ENCODE measurements at regions of chr7 and their contacts with region 1.

Region 1: GRCh38 chr7:143884969-143885559 is 16.9 kb downstream of the TCAF1 start:
- DNase-seq: peak in 3 of 5 donors; percentile 35 to 56 (median 45)
- ATAC-seq: peak in 1 of 4 donors; percentile 30
- H3K4me3 ChIP-seq: peak overlapping the region in 10 of 12 donors; percentile 11 to 54 (median 41)
- H3K27ac ChIP-seq: peak overlapping the region in 3 of 12 donors; percentile 1 to 63 (median 35)
- H3K4me1 ChIP-seq: peaks cover 0 to 25% (median 11%) of the 10 kb centered on the region in 12 donors
- H3K27me3 ChIP-seq: peaks cover 0 to 15% (median 0%) of the 10 kb centered on the region in 9 donors
- CTCF ChIP-seq: no peak
- POLR2A ChIP-seq: no peak

Region 2: GRCh38 chr7:143901668-143902331 is 16.7 kb after region 1 on chr7 and contains the start of gene TCAF1:
- intact Hi-C with region 1: loop called in 3 of 10 experiments (anchors 1 to 2 kb)
- DNase-seq: peak; percentile 97 to 98 (median 97)
- ATAC-seq: peak; percentile 97 to 99 (median 99)
- H3K4me3 ChIP-seq: peak within 1 kb of the TSS; percentile 62 to 99 (median 89)
- H3K27ac ChIP-seq: peak within 1 kb of the TSS; percentile 86 to 98 (median 96)
- H3K4me1 ChIP-seq: peaks cover 0 to 41% (median 22%) of the 10 kb centered on the region in 12 donors
- H3K27me3 ChIP-seq: no peaks in the 10 kb centered on the region
- CTCF ChIP-seq: peak in 8 of 12 donors; percentile 17 to 50 (median 36)
- POLR2A ChIP-seq: peak in 1 of 2 donors; percentile 81
- total RNA-seq, gene TCAF1: 31.4 to 71.1 (median 58.0) TPM

Region 3: GRCh38 chr7:144001543-144001942 is 116.5 kb after region 1 on chr7:
- intact Hi-C with region 1: loop called in 1 of 10 experiments (anchors 10 kb)
- DNase-seq: no peak
- ATAC-seq: no peak
- H3K4me3 ChIP-seq: no peak overlapping the region
- H3K27ac ChIP-seq: no peak overlapping the region
- H3K4me1 ChIP-seq: peaks cover 0 to 5% (median 0%) of the 10 kb centered on the region in 12 donors
- H3K27me3 ChIP-seq: no peaks in the 10 kb centered on the region
- CTCF ChIP-seq: no peak
- POLR2A ChIP-seq: no peak

Region 4: DNA sequence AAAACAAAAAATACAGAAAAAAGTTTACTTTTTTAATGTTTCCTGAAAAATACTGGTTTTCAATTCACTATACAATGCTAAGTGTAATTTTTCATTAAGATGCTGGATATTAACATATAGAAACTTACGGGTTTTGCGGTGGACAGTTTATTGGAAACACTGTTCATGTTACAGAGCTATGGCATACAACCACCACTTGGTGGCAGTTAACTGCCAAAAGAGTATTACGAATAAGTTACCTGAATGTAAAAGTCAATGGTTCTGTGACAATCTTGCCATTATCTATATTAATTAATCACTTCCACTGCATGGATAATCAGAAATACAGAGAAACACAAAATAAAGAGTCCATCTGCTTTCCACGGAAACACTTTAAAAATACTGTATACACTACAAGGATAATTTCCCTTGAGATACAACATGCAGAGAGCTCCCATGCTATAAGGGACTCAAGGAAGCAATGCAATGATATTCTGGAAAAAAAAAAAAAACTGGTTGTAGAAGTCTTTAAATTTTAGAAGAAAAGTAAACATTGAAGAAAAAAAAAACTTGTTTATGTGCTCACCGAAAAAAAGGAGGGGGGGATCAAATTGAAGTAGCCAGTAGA is 853.7 kb after region 1 on chr7:
- intact Hi-C with region 1: no loop called
- DNase-seq: no peak
- ATAC-seq: peak in 2 of 4 donors; percentile 42 to 67
- H3K4me3 ChIP-seq: no peak overlapping the region
- H3K27ac ChIP-seq: no peak overlapping the region
- H3K4me1 ChIP-seq: peaks cover 0 to 3% (median 0%) of the 10 kb centered on the region in 12 donors
- H3K27me3 ChIP-seq: no peaks in the 10 kb centered on the region
- CTCF ChIP-seq: peak; percentile 58 to 77 (median 68)
- POLR2A ChIP-seq: no peak

Measured in heart left ventricle (tissue), 16 donors.